H1 (cell line): ENCODE measurements at regions of chr2 and their contacts with region 1.

Region 1: DNA sequence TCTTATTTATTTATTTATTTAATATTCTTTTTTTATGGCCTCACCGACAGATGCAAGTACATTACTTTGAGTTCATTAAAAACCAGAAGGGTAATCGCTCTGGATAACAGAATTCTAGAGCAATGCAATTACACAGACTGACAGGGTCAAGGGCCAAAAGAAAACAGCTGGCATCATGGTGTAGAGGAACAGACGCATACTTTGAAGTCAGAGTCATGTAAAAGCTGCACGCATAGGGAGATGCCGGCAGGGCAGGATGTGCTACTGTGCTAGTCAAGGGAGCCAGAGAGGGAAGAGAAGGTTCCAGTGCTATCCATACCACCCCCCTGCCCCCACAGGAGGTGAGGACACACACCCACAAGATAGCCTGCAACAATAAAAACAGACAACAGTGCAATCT is 115.2 kb upstream of the TFCP2L1 start:
- DNase-seq: no peak
- H3K4me3 ChIP-seq: no peak overlapping the region
- H3K27ac ChIP-seq: no peak overlapping the region
- H3K4me1 ChIP-seq: no peaks in the 10 kb centered on the region
- H3K27me3 ChIP-seq: no peaks in the 10 kb centered on the region
- CTCF ChIP-seq: no peak
- EP300 ChIP-seq: no peak
- POLR2A ChIP-seq: no peak
- RAD21 ChIP-seq: no peak

Region 2: DNA sequence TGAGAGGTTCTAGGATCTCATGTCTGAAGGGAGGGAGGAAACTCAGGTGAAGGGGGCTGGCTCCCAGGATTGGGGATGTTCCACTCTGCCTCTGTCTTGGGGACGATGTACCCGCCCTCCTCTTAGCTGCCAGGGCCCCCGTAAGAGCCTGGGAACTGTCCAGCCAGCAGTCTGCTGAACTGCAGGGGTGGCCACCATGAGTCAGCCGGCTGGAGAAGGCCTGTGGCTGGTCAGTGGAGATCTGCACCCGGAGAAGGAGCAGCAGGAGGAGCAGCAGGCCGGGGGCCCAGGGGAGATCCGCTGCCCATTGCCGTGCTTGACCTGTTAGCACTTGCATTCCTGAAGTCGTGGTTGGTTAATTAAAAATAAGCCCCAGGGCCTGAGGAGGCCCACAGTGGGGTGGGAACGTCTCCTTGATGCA is 295.5 kb before region 1 on chr2:
- CTCF ChIA-PET with region 1: no interaction called
- POLR2A ChIA-PET with region 1: no interaction called
- DNase-seq: no peak
- H3K4me3 ChIP-seq: no peak overlapping the region
- H3K27ac ChIP-seq: no peak overlapping the region
- H3K4me1 ChIP-seq: peaks cover 0 to 4% (median 2%) of the 10 kb centered on the region in 4 experiments; a peak in 4 of 7 replicates
- H3K27me3 ChIP-seq: peaks cover 0 to 2% (median 0%) of the 10 kb centered on the region in 4 experiments; a peak in 2 of 7 replicates
- CTCF ChIP-seq: no peak
- EP300 ChIP-seq: no peak
- POLR2A ChIP-seq: no peak
- RAD21 ChIP-seq: no peak

Region 3: GRCh38 chr2:121136323-121136722 is 263.9 kb before region 1 on chr2:
- CTCF ChIA-PET with region 1: no interaction called
- POLR2A ChIA-PET with region 1: no interaction called
- DNase-seq: no peak
- H3K4me3 ChIP-seq: no peak overlapping the region
- H3K27ac ChIP-seq: no peak overlapping the region
- H3K4me1 ChIP-seq: peaks cover 0 to 19% (median 12%) of the 10 kb centered on the region in 4 experiments; a peak in 6 of 7 replicates
- H3K27me3 ChIP-seq: peaks cover 0 to 6% (median 2%) of the 10 kb centered on the region in 4 experiments; a peak in 2 of 7 replicates
- CTCF ChIP-seq: no peak
- EP300 ChIP-seq: no peak
- POLR2A ChIP-seq: no peak
- RAD21 ChIP-seq: no peak

Region 4: DNA sequence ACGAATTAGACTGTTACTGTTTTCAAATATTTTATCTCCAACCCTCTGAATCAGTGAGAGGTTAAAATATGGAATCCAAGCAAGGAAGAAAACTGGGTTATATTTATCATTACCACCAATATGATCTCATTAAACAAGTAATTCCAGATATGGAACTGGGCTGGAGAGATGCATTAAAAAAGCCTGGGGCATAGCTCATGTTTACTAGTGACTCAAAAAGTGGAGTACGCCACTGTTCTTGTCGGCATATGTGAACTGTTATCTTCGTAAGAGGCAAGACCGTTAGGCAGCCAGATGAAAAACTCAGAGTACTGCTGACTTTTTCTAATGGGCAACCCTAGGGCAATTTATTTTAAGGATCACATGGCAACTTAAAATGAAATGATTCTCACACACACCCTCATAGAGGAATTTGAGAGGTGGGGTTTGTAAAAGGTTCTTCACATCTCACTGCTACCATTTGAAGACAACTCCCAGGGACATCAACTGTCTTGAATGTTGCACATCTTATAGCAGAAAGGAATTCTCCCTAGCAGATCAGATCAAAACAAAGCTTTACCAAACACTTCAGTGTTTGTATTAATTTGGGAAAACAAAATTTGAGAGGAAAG is 10.0 kb before region 1 on chr2:
- CTCF ChIA-PET with region 1: interaction called, 10 read pairs
- POLR2A ChIA-PET with region 1: interaction called, 3 read pairs
- DNase-seq: no peak
- H3K4me3 ChIP-seq: no peak overlapping the region
- H3K27ac ChIP-seq: no peak overlapping the region
- H3K4me1 ChIP-seq: no peaks in the 10 kb centered on the region
- H3K27me3 ChIP-seq: no peaks in the 10 kb centered on the region
- CTCF ChIP-seq: no peak
- EP300 ChIP-seq: no peak
- POLR2A ChIP-seq: no peak
- RAD21 ChIP-seq: no peak

Region 5: GRCh38 chr2:121412349-121412748 is 12.1 kb after region 1 on chr2:
- CTCF ChIA-PET with region 1: interaction called, 14 read pairs
- POLR2A ChIA-PET with region 1: no interaction called
- DNase-seq: no peak
- H3K4me3 ChIP-seq: no peak overlapping the region
- H3K27ac ChIP-seq: no peak overlapping the region
- H3K4me1 ChIP-seq: no peaks in the 10 kb centered on the region
- H3K27me3 ChIP-seq: no peaks in the 10 kb centered on the region
- CTCF ChIP-seq: no peak
- EP300 ChIP-seq: no peak
- POLR2A ChIP-seq: no peak
- RAD21 ChIP-seq: no peak

Region 6: GRCh38 chr2:121722479-121722878 is 322.3 kb after region 1 on chr2:
- CTCF ChIA-PET with region 1: interaction called, 16 read pairs
- POLR2A ChIA-PET with region 1: no interaction called
- DNase-seq: no peak
- H3K4me3 ChIP-seq: no peak overlapping the region
- H3K27ac ChIP-seq: no peak overlapping the region
- H3K4me1 ChIP-seq: no peaks in the 10 kb centered on the region
- H3K27me3 ChIP-seq: no peaks in the 10 kb centered on the region
- CTCF ChIP-seq: no peak
- EP300 ChIP-seq: no peak
- POLR2A ChIP-seq: no peak
- RAD21 ChIP-seq: no peak